Activated CD8-positive, alpha-beta memory T cell treated with anti-CD3 and anti-CD28 coated beads, Interleukin-2, amount 10 ng/mL, durations not matched to agents 7 days and 5 days (primary cell): ENCODE measurements at regions of chr1 and their contacts with region 1.

Region 1: DNA sequence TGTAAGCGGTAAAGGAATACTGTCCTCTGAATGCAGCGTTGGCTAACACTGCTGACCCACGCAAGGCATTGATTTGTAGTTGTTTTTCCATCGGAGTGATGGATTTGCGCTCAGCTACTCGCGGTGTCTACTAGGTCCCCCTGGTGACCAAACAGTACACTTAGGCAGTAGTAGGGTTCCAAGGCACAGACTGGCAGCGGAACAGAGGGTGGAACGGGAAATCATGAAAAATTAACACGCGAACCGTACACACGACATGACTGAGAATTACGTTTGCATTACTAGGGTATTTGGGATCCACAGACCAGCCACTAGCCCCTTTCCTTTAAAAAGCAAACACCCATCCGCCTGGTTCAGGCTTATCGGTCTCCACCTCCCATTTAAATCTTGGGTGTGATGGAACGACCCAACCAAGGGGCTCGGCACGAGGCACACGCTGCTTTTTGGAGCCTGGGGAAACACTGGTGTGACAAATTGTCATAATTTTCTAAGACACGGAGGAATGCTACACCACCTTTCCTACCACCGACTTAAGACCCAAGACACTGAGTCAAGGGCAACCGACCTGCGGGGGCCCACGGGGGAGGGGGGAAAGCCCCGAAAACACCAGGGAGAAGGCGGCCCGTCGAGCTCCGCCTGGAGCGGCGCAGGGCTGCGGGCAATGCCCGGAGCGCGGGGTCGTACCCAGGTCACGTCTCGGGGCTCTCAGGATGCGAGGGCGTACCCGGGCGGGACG is 699 bp downstream of the DIPK1A start:
- DNase-seq: peak; percentile 81
- ATAC-seq: peak; percentile 50
- H3K4me3 Mint-ChIP-seq: no peak overlapping the region
- H3K27ac Mint-ChIP-seq: peak overlapping the region; percentile 96
- H3K4me1 Mint-ChIP-seq: peaks cover 38% of the 10 kb centered on the region
- H3K27me3 Mint-ChIP-seq: no peaks in the 10 kb centered on the region

Region 2: GRCh38 chr1:92831762-92832536 is 128.6 kb before region 1 on chr1 and contains the start of gene RPL5:
- CTCF ChIA-PET with region 1: interaction called, 31 read pairs
- DNase-seq: peak; percentile 98
- ATAC-seq: peak; percentile 89
- H3K4me3 Mint-ChIP-seq: peak within 1 kb of the TSS; percentile 99
- H3K27ac Mint-ChIP-seq: peak within 1 kb of the TSS; percentile 97
- H3K4me1 Mint-ChIP-seq: peaks cover 44% of the 10 kb centered on the region
- H3K27me3 Mint-ChIP-seq: no peaks in the 10 kb centered on the region
- total RNA-seq, gene RPL5: 581 to 800 TPM

Region 3: GRCh38 chr1:92882819-92883218 is 77.7 kb before region 1 on chr1:
- CTCF ChIA-PET with region 1: interaction called, 15 read pairs
- DNase-seq: peak; percentile 61
- ATAC-seq: peak; percentile 91
- H3K4me3 Mint-ChIP-seq: no peak overlapping the region
- H3K27ac Mint-ChIP-seq: peak overlapping the region; percentile 66
- H3K4me1 Mint-ChIP-seq: peaks cover 26% of the 10 kb centered on the region
- H3K27me3 Mint-ChIP-seq: no peaks in the 10 kb centered on the region

Region 4: GRCh38 chr1:92975551-92976232 is 15.1 kb after region 1 on chr1:
- CTCF ChIA-PET with region 1: interaction called, 39 read pairs
- DNase-seq: peak; percentile 71
- ATAC-seq: peak; percentile 64
- H3K4me3 Mint-ChIP-seq: no peak overlapping the region
- H3K27ac Mint-ChIP-seq: peak overlapping the region; percentile 82
- H3K4me1 Mint-ChIP-seq: peaks cover 63% of the 10 kb centered on the region
- H3K27me3 Mint-ChIP-seq: no peaks in the 10 kb centered on the region

Region 5: DNA sequence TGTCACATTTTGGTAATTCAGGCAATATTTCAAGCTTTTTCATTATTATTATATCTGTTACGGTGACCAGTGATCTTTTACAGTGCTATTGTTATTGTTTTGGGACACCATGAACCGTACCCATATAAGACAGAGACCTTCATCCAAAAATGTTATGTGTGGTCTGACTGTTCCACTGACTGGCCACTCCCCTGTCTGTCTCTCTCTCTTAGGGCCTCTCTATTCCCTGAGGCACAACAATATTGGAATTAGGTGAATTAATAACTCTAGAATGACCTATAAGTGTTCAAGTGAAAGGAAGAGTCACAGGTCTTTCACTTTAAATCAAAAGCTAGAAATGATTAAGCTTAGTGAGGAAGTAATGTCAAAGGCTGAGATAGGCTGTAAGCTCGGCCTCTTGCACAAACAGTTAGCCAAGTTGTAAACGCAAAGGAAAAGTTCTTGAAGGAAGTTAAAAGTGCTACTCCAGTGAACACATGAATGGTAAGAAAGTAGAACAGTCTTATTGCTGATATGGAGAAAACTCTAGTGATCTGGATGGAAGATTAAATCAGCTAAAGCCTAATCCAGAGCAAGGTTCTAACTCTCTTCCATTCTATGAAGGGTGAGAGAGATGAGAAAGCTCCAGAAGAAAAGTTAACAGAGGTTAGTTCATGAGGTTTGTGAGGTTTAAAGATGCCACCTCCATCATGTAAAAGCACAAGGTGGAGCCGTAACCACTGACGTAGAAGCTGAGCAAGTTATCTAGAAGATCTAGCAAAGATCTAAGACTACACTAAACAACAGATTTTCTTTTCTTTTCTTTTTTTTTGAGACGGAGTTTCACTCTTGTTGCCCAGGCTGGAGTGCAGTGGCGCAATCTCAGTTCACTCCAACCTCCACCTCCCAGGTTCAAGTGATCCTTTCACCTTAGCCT is 20.4 kb after region 1 on chr1:
- CTCF ChIA-PET with region 1: interaction called, 483 read pairs
- DNase-seq: peak; percentile 71
- ATAC-seq: peak; percentile 78
- H3K4me3 Mint-ChIP-seq: peak overlapping the region; percentile 62
- H3K27ac Mint-ChIP-seq: peak overlapping the region; percentile 98
- H3K4me1 Mint-ChIP-seq: peaks cover 51% of the 10 kb centered on the region
- H3K27me3 Mint-ChIP-seq: no peaks in the 10 kb centered on the region